Right cardiac atrium (tissue), 5 donors: ENCODE measurements at regions of chr21 and their contacts with region 1.

Region 1: GRCh38 chr21:28336314-28336713 is 656.4 kb downstream of the LTN1 start:
- DNase-seq: no peak
- ATAC-seq: peak; percentile 39 to 46
- H3K4me3 ChIP-seq: no peak overlapping the region
- H3K27ac ChIP-seq: no peak overlapping the region
- H3K4me1 ChIP-seq: peaks cover 2% of the 10 kb centered on the region
- H3K27me3 ChIP-seq: no peaks in the 10 kb centered on the region

Region 2: GRCh38 chr21:26850108-26850643 is 1486.1 kb before region 1 on chr21:
- intact Hi-C with region 1: loop called (anchors 5 to 10 kb)
- DNase-seq: no peak
- ATAC-seq: no peak
- H3K4me3 ChIP-seq: no peak overlapping the region
- H3K27ac ChIP-seq: no peak overlapping the region
- H3K4me1 ChIP-seq: no peaks in the 10 kb centered on the region
- H3K27me3 ChIP-seq: no peaks in the 10 kb centered on the region

Region 3: GRCh38 chr21:27759091-27759659 is 577.1 kb before region 1 on chr21:
- intact Hi-C with region 1: loop called in 1 of 4 experiments (anchors 10 kb)
- DNase-seq: peak; percentile 14 to 53 (median 38)
- ATAC-seq: peak in 1 of 2 donors; percentile 56
- H3K4me3 ChIP-seq: no peak overlapping the region
- H3K27ac ChIP-seq: no peak overlapping the region
- H3K4me1 ChIP-seq: no peaks in the 10 kb centered on the region
- H3K27me3 ChIP-seq: no peaks in the 10 kb centered on the region

Region 4: DNA sequence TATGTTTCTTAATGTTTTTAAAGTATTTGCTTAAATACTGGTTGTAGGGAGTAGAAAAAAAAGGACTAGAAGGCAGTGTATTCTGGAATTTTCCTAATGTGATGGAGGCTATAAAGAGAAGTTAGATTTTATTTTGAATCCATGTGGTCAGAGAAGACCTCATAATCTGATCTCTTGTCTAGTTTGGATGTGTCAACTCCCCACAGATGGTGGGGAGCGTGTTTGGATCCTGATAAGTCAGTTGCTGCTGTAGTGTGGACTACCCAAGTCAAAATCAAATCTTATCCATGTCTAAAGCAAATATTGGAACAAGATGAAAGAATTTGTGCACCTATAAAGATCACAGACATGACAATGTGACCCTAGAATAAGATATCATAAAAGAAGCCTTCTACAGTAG is 261.6 kb before region 1 on chr21:
- intact Hi-C with region 1: loop called in 2 of 4 experiments (anchors 10 kb)
- DNase-seq: no peak
- ATAC-seq: no peak
- H3K4me3 ChIP-seq: no peak overlapping the region
- H3K27ac ChIP-seq: no peak overlapping the region
- H3K4me1 ChIP-seq: no peaks in the 10 kb centered on the region
- H3K27me3 ChIP-seq: no peaks in the 10 kb centered on the region

Region 5: DNA sequence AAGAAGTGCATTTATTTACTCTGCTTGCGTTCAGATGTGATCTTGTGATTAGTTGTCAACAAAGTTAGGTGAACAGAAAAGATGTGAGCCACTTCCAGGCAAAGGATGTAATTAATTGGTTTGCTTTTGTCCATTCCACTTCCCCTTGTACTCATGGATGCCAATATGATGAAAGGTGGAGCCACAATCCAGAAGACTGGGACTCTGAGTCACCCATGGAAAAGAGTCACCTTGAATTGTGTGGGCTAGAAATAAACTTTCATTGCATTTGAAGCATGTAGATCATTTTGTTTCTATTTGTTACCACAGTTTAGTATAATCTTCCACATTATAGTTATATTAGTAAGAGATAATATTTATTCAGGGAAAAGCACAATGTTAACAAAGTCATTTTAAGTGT is 27.8 kb before region 1 on chr21:
- intact Hi-C with region 1: no loop called
- DNase-seq: no peak
- ATAC-seq: no peak
- H3K4me3 ChIP-seq: no peak overlapping the region
- H3K27ac ChIP-seq: no peak overlapping the region
- H3K4me1 ChIP-seq: no peaks in the 10 kb centered on the region
- H3K27me3 ChIP-seq: no peaks in the 10 kb centered on the region